Natural killer cell (primary cell): ENCODE measurements at regions of chr2 and their contacts with region 1.

Region 1: GRCh38 chr2:102606363-102606762 is 13.0 kb upstream of the SLC9A2 start:
- DNase-seq: no peak
- ATAC-seq: no peak
- H3K4me3 ChIP-seq: no peak overlapping the region
- H3K4me3 Mint-ChIP-seq: no peak overlapping the region
- H3K27ac ChIP-seq: no peak overlapping the region
- H3K27ac Mint-ChIP-seq: no peak overlapping the region
- H3K4me1 ChIP-seq: peaks cover under 1% of the 10 kb centered on the region
- H3K4me1 Mint-ChIP-seq: peaks cover 18 to 19% of the 10 kb centered on the region in 2 donors
- H3K27me3 ChIP-seq: no peaks in the 10 kb centered on the region
- H3K27me3 Mint-ChIP-seq: peaks cover 4 to 13% of the 10 kb centered on the region in 2 donors
- CTCF ChIP-seq: no peak

Region 2: DNA sequence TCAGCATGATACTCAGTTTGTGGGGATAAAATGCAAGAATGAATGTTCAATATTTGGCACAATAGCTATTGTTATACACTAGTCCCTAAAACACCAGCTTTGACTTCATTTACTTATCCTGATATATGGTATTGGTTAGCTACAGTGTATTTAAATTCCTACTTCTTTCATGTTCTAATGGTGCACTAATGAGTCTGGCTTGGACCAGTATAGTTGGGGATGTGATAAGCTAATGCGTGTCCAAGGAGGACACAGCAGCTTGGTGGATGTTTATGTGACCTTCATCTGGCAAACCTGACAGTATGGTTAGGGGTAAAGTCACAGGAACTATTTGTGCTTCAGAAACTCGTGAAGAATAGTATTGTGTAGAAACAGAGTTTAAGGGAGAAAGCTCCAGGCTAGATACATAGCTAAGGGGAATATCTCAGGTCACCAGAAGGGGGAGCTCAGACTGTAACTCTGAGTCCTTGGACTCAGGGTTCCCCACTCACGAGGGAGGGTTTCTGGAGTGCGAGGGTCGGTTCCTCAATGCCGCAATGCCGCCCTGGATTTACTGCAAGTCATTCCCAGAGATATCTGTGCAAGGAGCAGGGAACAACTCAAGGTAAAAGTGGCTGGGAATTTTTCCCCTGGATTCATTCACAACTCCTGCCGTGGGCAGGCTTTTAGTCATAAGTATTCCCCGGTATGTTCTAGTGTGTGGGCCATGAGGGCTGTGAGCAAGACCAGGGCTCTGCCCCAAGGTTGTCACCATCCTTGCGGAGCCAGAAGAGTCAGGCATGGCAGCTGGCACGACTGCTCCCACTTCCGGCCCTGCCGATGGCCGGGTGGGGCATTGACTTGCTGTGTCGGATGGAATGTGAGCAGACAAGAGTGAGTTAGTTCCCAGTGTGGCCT is 600.1 kb before region 1 on chr2:
- intact Hi-C with region 1: loop called (anchors 10 kb)
- DNase-seq: peak in 1 of 2 donors; percentile 68
- ATAC-seq: peak in 2 of 3 donors; percentile 55 to 58
- H3K4me3 ChIP-seq: no peak overlapping the region
- H3K4me3 Mint-ChIP-seq: peak overlapping the region; percentile 3
- H3K27ac ChIP-seq: no peak overlapping the region
- H3K27ac Mint-ChIP-seq: no peak overlapping the region
- H3K4me1 ChIP-seq: peaks cover 36% of the 10 kb centered on the region
- H3K4me1 Mint-ChIP-seq: peaks cover 2 to 18% of the 10 kb centered on the region in 2 donors
- H3K27me3 ChIP-seq: peaks cover 16% of the 10 kb centered on the region
- H3K27me3 Mint-ChIP-seq: peaks cover 42 to 50% of the 10 kb centered on the region in 2 donors
- CTCF ChIP-seq: peak; percentile 69